Vagina (tissue), 2 donors: ENCODE measurements at regions of chr1 and their contacts with region 1.

Region 1: GRCh38 chr1:237108297-237109040 is 66.5 kb downstream of the RYR2 start:
- DNase-seq: no peak
- H3K4me3 ChIP-seq: no peak overlapping the region
- H3K27ac ChIP-seq: no peak overlapping the region
- H3K4me1 ChIP-seq: peaks cover 8% of the 10 kb centered on the region
- H3K27me3 ChIP-seq: no peaks in the 10 kb centered on the region
- CTCF ChIP-seq: no peak
- POLR2A ChIP-seq: no peak

Region 2: DNA sequence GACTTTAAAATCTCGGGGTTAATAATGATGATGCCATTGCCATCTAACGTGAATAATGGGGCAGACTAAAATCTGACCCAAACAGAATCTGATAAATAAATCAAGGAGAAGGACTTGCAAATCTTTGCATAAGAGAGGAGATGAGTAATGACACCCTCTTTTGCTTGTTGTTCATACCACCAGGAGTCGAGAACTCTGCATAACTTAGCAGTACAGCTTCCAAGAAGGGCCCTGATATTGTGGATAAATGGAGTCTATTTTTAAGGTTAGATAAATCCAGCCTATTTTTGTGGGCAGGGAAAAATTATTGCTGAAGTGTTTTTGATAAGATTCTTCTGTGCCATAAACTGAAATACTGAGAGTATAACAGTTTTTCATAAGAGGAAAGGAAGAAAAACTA is 49.2 kb before region 1 on chr1:
- intact Hi-C with region 1: loop called (anchors 1 kb)
- DNase-seq: no peak
- H3K4me3 ChIP-seq: no peak overlapping the region
- H3K27ac ChIP-seq: no peak overlapping the region
- H3K4me1 ChIP-seq: no peaks in the 10 kb centered on the region
- H3K27me3 ChIP-seq: no peaks in the 10 kb centered on the region
- CTCF ChIP-seq: no peak
- POLR2A ChIP-seq: no peak